ENCODE measurements at regions of chr3 and their contacts with region 1.

Region 1: DNA sequence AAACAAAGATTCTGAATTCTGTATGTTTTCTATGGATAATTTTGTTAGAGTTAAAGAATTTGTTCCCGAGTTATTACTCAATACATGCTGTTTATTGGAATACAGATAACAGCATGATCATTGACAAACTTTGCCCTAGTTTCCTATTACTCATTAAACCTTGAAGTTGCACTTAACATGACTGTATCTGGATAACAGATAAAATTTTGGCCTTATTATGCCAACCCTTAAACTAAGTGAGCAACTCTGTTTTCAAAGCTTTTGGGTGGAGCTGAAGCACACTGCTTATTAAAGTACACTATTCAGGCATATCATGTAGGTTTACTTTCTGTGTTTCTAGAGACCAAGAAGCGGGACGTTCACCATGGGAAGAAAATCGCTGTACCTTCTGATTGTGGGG is at the start of gene AADAC:
- DNase-seq: no peak
- H3K4me3 ChIP-seq: no peak within 1 kb of the TSS
- H3K27ac ChIP-seq: no peak within 1 kb of the TSS
- H3K4me1 ChIP-seq: no peaks in the 10 kb centered on the region
- H3K27me3 ChIP-seq: no peaks in the 10 kb centered on the region
- CTCF ChIP-seq: no peak
- POLR2A ChIP-seq: no peak
- total RNA-seq, gene AADAC: 2.0 TPM

Region 2: GRCh38 chr3:152281133-152281713 is 467.4 kb after region 1 on chr3:
- intact Hi-C with region 1: no loop called
- DNase-seq: no peak
- H3K4me3 ChIP-seq: no peak overlapping the region
- H3K27ac ChIP-seq: peak overlapping the region; percentile 14
- H3K4me1 ChIP-seq: peaks cover 93% of the 10 kb centered on the region
- H3K27me3 ChIP-seq: no peaks in the 10 kb centered on the region
- CTCF ChIP-seq: no peak
- POLR2A ChIP-seq: no peak

Region 3: DNA sequence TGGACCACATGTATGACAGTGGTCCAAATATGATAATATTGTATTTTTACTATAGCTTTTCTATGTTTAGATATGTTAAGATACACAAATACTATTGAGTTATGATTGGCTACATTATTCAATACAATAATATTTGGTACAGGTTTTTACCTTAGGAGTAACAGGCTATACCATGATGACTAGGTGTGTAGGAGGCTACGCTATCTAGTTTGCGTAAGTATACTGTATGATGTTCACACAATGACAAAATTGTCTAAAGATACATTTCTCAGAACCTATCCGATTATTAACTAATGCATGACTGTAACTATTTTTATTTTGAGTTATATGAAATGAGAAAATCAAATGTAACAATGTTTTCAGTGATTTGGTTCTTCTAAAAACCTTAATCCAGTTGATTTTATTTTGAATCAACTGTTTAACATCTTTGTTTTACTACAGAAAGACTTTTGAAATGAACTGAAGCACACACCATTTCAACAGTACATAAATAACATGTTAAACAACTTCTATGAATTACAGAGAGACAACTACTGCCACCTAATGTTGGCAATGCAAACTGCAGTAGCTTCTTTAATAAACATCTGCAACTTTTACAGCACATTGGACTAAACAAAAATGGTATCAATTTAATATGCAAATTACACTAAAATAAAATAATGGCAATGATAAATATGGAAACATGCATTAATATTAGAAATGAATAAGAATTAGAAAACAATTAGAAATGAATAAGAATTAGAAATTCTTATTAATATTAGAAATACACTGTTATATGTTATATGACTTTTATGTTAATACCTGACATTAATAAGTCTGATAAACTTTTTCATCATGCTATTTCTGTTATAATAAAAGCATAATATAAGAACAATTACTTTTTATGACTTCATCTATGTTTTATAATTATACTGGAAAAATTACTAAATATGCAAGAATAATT is 710.7 kb after region 1 on chr3:
- intact Hi-C with region 1: loop called (anchors 5 kb)
- DNase-seq: no peak
- H3K4me3 ChIP-seq: no peak overlapping the region
- H3K27ac ChIP-seq: no peak overlapping the region
- H3K4me1 ChIP-seq: no peaks in the 10 kb centered on the region
- H3K27me3 ChIP-seq: no peaks in the 10 kb centered on the region
- CTCF ChIP-seq: peak; percentile 74 to 84 (median 82)
- POLR2A ChIP-seq: no peak

Measured in vagina (tissue), 2 donors.